ENCODE measurements at regions of chr15 and their contacts with region 1.

Region 1: GRCh38 chr15:30896211-30896606 is 7.5 kb upstream of the FAN1 start:
- DNase-seq: no peak
- CTCF ChIP-seq: no peak

Region 2: DNA sequence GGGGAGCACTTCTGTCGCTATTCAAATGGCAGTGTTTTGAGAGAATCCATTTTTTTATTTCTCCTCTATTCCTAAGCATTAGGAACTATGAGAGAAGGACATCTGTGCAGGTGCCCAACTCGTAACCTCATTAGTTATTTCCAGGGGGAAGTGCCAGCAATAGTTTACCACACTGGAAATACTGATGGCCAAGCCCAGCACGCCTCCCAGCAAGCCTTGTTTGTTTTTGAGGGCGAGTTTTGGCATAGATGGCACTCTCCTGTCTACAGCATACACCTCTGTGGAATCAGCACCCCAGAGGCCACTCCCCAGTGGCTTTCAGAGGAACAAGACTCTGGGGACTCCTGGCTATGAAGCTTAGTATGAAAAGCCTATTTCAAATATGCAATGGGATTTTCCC is 44.1 kb after region 1 on chr15:
- in situ Hi-C with region 1: no loop called
- DNase-seq: no peak
- CTCF ChIP-seq: no peak

Region 3: DNA sequence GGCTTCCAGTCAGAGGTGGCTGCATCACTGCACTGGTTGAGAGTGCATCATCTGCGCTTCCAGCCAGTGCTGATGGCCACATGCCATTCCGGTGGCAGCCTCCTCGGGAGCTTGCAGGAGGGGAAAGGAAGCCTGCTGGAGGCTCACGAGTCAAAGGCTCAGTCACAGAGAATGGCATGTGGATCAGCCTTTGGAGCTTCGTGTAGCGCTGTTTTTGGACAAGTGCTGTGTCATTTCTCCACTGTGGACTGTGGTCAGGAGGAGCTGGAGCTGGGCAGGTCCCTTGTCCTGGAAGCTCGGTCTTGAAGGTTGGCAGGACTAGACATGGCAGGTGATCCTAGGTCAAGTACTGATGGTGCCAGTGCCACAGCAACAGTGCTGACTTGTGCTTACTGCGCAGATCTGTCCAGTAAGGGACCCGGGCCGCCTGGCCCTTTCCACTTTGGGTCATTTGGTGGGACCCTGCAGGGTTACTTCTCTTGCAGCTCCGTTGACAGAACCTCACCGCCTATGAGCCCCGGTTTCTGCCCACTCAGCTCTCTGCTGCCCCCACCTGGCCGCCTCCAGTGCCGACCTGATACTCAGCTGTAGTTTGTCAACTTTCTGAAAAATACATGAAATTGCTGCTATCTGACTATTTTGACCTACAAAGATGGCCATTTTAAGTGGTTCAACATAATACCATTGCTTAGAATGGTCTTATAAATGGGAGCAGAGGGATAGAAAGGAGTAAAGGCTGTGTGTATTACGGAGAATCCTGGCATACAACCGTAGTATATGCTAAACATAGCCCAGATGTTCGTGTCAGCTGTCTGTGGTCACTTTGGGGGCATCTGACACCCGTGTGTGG is 232.9 kb after region 1 on chr15:
- in situ Hi-C with region 1: loop called (anchors 10 kb)
- DNase-seq: peak; percentile 77
- CTCF ChIP-seq: peak; percentile 96